CD4-positive, alpha-beta T cell (primary cell): ENCODE measurements at regions of chr12 and their contacts with region 1.

Region 1: GRCh38 chr12:101839324-101840283 is 8.8 kb upstream of the GNPTAB start:
- DNase-seq: peak; percentile 39 to 87 (median 66)
- ATAC-seq: peak; percentile 83
- H3K4me3 ChIP-seq: no peak overlapping the region
- H3K4me3 Mint-ChIP-seq: no peak overlapping the region
- H3K27ac ChIP-seq: no peak overlapping the region
- H3K27ac Mint-ChIP-seq: no peak overlapping the region
- H3K4me1 ChIP-seq: peaks cover 14% of the 10 kb centered on the region
- H3K4me1 Mint-ChIP-seq: peaks cover 13% of the 10 kb centered on the region
- H3K27me3 ChIP-seq: no peaks in the 10 kb centered on the region
- H3K27me3 Mint-ChIP-seq: no peaks in the 10 kb centered on the region
- CTCF ChIP-seq: peak; percentile 98

Region 2: GRCh38 chr12:100573292-100574186 is 1266.1 kb before region 1 on chr12 and contains the start of gene GAS2L3:
- CTCF ChIA-PET with region 1: no interaction called
- POLR2A ChIA-PET with region 1: no interaction called
- intact Hi-C with region 1: no loop called
- DNase-seq: peak; percentile 1 to 78 (median 26)
- ATAC-seq: peak; percentile 59
- H3K4me3 ChIP-seq: peak within 1 kb of the TSS; percentile 73
- H3K4me3 Mint-ChIP-seq: peak within 1 kb of the TSS; percentile 89
- H3K27ac ChIP-seq: no peak within 1 kb of the TSS
- H3K27ac Mint-ChIP-seq: no peak within 1 kb of the TSS
- H3K4me1 ChIP-seq: peaks cover 15% of the 10 kb centered on the region
- H3K4me1 Mint-ChIP-seq: peaks cover 13% of the 10 kb centered on the region
- H3K27me3 ChIP-seq: peaks cover 1 to 14% of the 10 kb centered on the region in 2 experiments
- H3K27me3 Mint-ChIP-seq: peaks cover 24% of the 10 kb centered on the region
- CTCF ChIP-seq: no peak
- total RNA-seq, gene GAS2L3: 0.22 to 0.27 TPM

Region 3: GRCh38 chr12:101414533-101415119 is 425.0 kb before region 1 on chr12:
- CTCF ChIA-PET with region 1: interaction called, 4 read pairs
- POLR2A ChIA-PET with region 1: no interaction called
- intact Hi-C with region 1: loop called (anchors 5 kb)
- DNase-seq: peak in 4 of 14 experiments; percentile 17 to 52 (median 42)
- ATAC-seq: no peak
- H3K4me3 ChIP-seq: no peak overlapping the region
- H3K4me3 Mint-ChIP-seq: no peak overlapping the region
- H3K27ac ChIP-seq: no peak overlapping the region
- H3K27ac Mint-ChIP-seq: no peak overlapping the region
- H3K4me1 ChIP-seq: no peaks in the 10 kb centered on the region
- H3K4me1 Mint-ChIP-seq: no peaks in the 10 kb centered on the region
- H3K27me3 ChIP-seq: no peaks in the 10 kb centered on the region
- H3K27me3 Mint-ChIP-seq: no peaks in the 10 kb centered on the region
- CTCF ChIP-seq: peak; percentile 69

Region 4: GRCh38 chr12:101759396-101760047 is 80.1 kb before region 1 on chr12:
- CTCF ChIA-PET with region 1: interaction called, 19 read pairs
- POLR2A ChIA-PET with region 1: interaction called, 3 read pairs
- intact Hi-C with region 1: no loop called
- DNase-seq: peak in 3 of 14 experiments; percentile 52 to 57 (median 57)
- ATAC-seq: peak; percentile 71
- H3K4me3 ChIP-seq: no peak overlapping the region
- H3K4me3 Mint-ChIP-seq: no peak overlapping the region
- H3K27ac ChIP-seq: no peak overlapping the region
- H3K27ac Mint-ChIP-seq: no peak overlapping the region
- H3K4me1 ChIP-seq: no peaks in the 10 kb centered on the region
- H3K4me1 Mint-ChIP-seq: peaks cover 4% of the 10 kb centered on the region
- H3K27me3 ChIP-seq: no peaks in the 10 kb centered on the region
- H3K27me3 Mint-ChIP-seq: no peaks in the 10 kb centered on the region
- CTCF ChIP-seq: peak; percentile 76

Region 5: DNA sequence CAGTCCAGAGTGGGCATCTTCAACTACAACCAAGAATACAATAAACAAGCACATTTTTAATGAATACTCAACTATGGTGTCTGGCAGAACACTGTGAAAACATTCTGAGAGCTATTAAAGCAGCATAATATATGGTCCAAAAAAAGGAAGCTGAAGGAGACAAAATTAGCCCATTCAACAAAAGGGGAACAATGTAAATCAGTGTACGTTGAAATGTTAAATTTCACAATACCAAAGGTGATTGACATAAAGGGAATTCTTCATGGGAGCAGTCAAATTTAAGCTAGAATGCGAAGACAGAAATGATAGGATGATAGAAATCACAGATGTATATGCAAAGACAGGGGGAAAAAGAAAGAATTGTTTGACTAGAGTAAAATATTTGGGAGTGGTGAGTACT is 59.0 kb before region 1 on chr12:
- CTCF ChIA-PET with region 1: interaction called, 14 read pairs
- POLR2A ChIA-PET with region 1: interaction called, 3 read pairs
- intact Hi-C with region 1: no loop called
- DNase-seq: no peak
- ATAC-seq: no peak
- H3K4me3 ChIP-seq: no peak overlapping the region
- H3K4me3 Mint-ChIP-seq: no peak overlapping the region
- H3K27ac ChIP-seq: no peak overlapping the region
- H3K27ac Mint-ChIP-seq: no peak overlapping the region
- H3K4me1 ChIP-seq: no peaks in the 10 kb centered on the region
- H3K4me1 Mint-ChIP-seq: no peaks in the 10 kb centered on the region
- H3K27me3 ChIP-seq: no peaks in the 10 kb centered on the region
- H3K27me3 Mint-ChIP-seq: no peaks in the 10 kb centered on the region
- CTCF ChIP-seq: no peak

Region 6: GRCh38 chr12:101823891-101824290 is 15.7 kb before region 1 on chr12:
- CTCF ChIA-PET with region 1: interaction called, 44 read pairs
- POLR2A ChIA-PET with region 1: interaction called, 13 read pairs
- intact Hi-C with region 1: no loop called
- DNase-seq: peak; percentile 40 to 90 (median 56)
- ATAC-seq: peak; percentile 99
- H3K4me3 ChIP-seq: no peak overlapping the region
- H3K4me3 Mint-ChIP-seq: peak overlapping the region; percentile 44
- H3K27ac ChIP-seq: no peak overlapping the region
- H3K27ac Mint-ChIP-seq: peak overlapping the region; percentile 83
- H3K4me1 ChIP-seq: peaks cover 47% of the 10 kb centered on the region
- H3K4me1 Mint-ChIP-seq: peaks cover 69% of the 10 kb centered on the region
- H3K27me3 ChIP-seq: no peaks in the 10 kb centered on the region
- H3K27me3 Mint-ChIP-seq: no peaks in the 10 kb centered on the region
- CTCF ChIP-seq: peak; percentile 42

Region 7: DNA sequence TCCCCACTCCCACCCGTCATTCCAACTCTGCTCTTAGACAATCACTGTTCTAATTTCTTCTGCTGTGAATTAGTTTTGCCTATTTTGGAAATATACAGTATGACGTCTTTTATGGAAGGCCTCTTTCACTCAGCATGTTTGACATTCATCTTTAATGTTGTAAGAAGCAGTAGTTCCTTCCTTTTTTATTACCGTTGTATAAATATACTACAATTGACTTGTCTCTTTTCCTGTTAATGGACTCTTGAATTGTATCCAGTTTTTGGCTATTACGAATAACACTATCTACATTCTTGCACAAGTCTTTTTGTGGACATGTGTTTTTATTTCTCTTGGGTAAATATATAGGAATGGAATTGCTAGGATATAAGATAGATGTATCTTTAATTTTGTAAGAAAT is 363.0 kb after region 1 on chr12:
- CTCF ChIA-PET with region 1: no interaction called
- POLR2A ChIA-PET with region 1: no interaction called
- intact Hi-C with region 1: no loop called
- DNase-seq: no peak
- ATAC-seq: no peak
- H3K4me3 ChIP-seq: no peak overlapping the region
- H3K4me3 Mint-ChIP-seq: no peak overlapping the region
- H3K27ac ChIP-seq: no peak overlapping the region
- H3K27ac Mint-ChIP-seq: no peak overlapping the region
- H3K4me1 ChIP-seq: no peaks in the 10 kb centered on the region
- H3K4me1 Mint-ChIP-seq: no peaks in the 10 kb centered on the region
- H3K27me3 ChIP-seq: no peaks in the 10 kb centered on the region
- H3K27me3 Mint-ChIP-seq: no peaks in the 10 kb centered on the region
- CTCF ChIP-seq: no peak